ENCODE measurements at regions of chr12 and their contacts with region 1.

Region 1: DNA sequence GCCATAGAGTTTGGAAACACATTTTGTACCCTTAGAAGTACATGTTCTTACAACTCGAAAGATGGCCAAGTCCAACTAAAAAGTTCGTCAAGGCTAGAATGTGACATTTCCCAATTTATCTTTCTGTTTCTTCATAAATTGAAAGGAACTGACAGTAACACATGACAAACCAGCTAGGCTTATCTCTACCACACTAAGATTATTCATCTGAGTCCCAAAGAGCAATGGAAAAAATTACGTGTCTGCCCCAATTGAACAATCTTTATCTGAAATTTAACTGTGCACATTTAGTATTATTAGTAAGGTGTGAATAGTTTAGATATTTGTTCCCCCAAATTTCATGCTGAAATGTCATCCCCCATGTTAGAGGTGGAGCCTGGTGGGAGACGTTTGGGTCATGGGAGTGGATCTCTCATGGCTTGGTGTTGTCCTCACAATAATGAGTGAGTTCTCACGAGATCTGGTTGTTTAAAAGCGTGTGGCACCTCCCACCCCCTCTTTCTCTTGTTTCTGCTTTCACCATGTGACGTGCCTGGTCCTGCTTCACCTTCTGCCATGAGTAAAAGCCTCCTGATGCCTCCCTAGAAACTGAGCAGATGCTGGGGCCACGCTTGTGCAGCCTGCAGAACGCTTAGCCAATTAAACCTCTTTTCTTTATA is 13.3 kb downstream of the CPM start:
- DNase-seq: no peak
- H3K4me3 Mint-ChIP-seq: peak overlapping the region; percentile 35
- H3K27ac Mint-ChIP-seq: no peak overlapping the region
- H3K4me1 Mint-ChIP-seq: peaks cover 25% of the 10 kb centered on the region
- H3K27me3 Mint-ChIP-seq: no peaks in the 10 kb centered on the region

Region 2: DNA sequence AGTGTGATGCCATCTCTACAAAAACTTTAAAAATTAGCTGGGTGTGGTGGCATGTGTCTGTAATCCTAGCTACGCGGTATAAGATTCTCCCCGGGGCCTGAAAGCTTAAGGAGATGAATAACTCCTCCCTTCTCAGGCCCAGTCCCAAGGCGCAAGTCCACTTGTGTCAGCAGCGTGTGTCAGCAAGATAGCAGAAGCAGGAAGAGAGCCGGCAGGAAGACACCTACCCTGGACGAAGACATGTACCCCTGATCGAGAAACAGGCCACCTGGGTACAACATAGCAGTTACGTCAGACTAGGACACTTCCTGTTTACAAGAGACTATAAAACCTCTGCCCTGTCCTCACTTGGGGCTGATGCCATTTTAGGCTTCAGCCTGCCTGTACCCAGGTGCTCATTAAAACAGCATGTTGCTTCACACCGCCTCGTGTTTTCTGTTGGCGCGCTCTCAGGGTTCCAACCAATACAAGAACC is 30.0 kb before region 1 on chr12:
- intact Hi-C with region 1: loop called (anchors 1 kb)
- DNase-seq: no peak
- H3K4me3 Mint-ChIP-seq: no peak overlapping the region
- H3K27ac Mint-ChIP-seq: peak overlapping the region; percentile 12
- H3K4me1 Mint-ChIP-seq: peaks cover 39% of the 10 kb centered on the region
- H3K27me3 Mint-ChIP-seq: no peaks in the 10 kb centered on the region

Region 3: DNA sequence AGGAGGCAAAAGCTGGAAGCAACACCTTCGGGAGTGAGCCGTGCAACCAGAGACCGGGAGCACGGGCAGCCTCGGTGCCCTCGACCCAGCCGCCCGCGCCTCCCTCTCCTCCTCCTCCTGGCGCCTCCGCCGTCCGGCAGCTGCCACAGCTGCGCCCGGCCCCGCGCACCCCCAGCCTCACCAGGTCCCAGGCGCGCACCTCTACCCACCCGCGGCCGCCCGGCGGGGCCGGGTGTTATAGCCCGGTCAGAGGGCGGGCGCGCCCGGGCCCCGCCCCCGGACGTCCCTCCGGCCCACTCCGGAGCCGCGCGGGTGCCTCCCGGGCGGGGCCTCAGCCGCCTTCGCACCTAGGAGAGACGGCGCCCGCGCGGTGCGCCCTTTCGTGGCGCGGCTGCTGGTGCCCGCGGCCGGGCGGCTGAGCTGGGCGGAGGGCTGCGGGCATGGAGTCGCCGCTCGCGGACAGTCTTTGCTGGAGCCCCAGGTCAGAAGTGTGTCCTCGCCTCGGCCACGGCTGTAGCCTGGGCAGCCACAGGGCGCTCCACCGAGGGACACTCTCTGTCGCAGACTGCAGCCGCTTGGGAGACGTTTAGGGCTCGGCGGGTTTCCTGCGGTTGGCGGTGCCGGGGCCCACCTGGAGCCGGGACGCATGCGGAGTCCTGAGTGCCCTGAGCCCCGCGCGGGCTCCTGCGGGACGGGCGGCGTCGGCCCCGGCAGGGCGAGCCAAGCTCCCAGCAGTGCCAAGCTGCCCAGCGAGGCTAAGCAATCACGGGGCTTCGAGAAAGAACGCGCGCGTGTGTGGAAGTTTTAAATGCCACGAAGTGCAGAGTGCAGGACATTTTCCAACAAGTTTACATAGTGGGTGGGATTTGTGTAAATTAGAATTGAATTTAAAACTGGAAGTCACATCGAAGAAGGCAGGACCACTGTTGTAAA is 13.5 kb after region 1 on chr12 and contains the start of gene CPM:
- intact Hi-C with region 1: loop called (anchors 1 kb)
- DNase-seq: peak; percentile 96
- H3K4me3 Mint-ChIP-seq: peak within 1 kb of the TSS; percentile 94
- H3K27ac Mint-ChIP-seq: peak within 1 kb of the TSS; percentile 85
- H3K4me1 Mint-ChIP-seq: peaks cover 19% of the 10 kb centered on the region
- H3K27me3 Mint-ChIP-seq: peaks cover 2% of the 10 kb centered on the region
- total RNA-seq, gene CPM: 63.5 and 76.5 TPM in 2 replicates

Region 4: DNA sequence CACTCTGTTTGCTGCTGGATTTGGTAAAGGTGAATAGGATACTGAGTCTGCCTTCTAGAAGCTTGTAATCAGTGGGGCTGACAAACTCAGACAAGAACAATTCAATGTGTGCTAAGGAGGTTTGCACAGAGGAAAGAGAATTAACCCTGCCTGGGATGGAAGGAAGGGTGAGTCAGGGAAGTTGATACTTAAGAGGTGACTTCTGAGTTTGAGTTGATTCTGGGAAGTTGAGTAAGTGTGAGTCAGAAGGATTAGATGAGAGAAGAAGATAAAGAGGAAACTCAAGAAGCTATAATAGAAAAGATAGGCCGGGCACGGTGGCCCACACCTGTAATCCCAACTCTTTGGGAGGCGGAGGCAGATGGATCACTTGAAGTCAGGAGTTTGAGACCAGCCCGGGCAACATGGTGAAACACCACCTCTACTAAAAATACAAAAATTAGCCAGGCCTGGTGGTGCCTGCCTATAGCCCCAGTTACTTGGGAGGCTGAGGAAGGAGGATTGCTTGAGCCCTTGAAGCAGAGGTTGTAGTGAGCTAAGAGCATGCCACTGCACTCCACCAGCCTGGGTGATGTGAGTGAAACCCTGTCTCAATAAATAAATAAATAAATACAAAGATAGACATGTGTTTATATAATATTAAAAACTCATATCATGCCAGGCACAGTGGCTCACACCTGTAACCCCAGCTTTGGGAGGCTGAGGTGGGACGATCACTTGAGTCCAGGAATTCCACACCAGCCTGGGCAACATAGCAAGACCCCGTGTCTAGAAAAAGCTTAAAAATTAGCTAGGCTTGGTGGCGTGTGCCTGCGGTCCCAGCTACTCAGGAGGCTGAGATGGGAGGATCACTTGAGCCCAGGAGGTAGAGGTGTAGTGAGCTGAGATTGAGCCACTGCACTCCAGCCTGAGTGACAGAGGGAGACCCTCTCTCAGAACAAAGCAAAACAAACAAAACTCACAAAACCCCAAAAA is 140.1 kb after region 1 on chr12:
- intact Hi-C with region 1: loop called (anchors 2 kb)
- DNase-seq: no peak
- H3K4me3 Mint-ChIP-seq: peak overlapping the region; percentile 27
- H3K27ac Mint-ChIP-seq: peak overlapping the region; percentile 73
- H3K4me1 Mint-ChIP-seq: peaks cover 29% of the 10 kb centered on the region
- H3K27me3 Mint-ChIP-seq: no peaks in the 10 kb centered on the region

Measured in activated CD4-positive, alpha-beta T cell treated with anti-CD3 and anti-CD28 coated beads, Interleukin-2, amount 10 ng/mL, durations not matched to agents 24 days and 14 days (primary cell).